ENCODE measurements at regions of chr12 and their contacts with region 1.

Region 1: DNA sequence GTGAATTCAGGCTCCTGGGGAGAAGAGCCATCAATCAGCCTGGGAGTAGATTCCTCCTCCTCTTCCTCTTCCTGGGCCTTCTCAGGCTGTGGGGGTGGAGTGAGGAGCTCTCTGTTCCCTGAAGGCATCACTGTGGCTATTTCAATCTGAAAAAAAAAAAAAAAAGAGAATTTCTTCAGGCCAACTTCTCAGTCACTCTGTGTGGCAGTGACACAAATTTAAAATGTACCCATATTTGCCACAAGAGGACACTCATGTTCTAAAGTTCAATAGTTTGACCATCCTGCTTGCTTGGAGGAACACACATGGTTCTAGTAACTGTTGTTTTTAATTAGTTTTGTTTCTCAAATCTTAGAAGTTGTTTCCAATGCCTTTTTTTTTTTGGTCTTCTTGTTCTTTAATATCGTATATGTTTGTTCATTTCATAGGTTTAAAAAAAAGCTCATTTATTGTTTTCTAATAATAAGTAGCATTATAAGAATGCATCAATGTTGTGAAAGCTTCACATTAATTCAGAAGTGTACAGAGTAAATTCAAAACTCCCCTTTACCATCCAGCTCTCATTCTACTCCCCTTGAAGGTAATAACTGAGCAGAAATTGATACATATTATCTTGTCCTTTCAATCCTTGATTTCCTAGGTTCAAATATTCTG is 23.3 kb upstream of the CCER1 start:
- DNase-seq: no peak
- ATAC-seq: peak; percentile 38 to 74 (median 51)
- H3K4me3 ChIP-seq: no peak overlapping the region
- H3K27ac ChIP-seq: no peak overlapping the region
- H3K4me1 ChIP-seq: no peaks in the 10 kb centered on the region
- H3K27me3 ChIP-seq: peaks cover 0 to 3% (median 0%) of the 10 kb centered on the region in 3 donors
- CTCF ChIP-seq: peak; percentile 54

Region 2: DNA sequence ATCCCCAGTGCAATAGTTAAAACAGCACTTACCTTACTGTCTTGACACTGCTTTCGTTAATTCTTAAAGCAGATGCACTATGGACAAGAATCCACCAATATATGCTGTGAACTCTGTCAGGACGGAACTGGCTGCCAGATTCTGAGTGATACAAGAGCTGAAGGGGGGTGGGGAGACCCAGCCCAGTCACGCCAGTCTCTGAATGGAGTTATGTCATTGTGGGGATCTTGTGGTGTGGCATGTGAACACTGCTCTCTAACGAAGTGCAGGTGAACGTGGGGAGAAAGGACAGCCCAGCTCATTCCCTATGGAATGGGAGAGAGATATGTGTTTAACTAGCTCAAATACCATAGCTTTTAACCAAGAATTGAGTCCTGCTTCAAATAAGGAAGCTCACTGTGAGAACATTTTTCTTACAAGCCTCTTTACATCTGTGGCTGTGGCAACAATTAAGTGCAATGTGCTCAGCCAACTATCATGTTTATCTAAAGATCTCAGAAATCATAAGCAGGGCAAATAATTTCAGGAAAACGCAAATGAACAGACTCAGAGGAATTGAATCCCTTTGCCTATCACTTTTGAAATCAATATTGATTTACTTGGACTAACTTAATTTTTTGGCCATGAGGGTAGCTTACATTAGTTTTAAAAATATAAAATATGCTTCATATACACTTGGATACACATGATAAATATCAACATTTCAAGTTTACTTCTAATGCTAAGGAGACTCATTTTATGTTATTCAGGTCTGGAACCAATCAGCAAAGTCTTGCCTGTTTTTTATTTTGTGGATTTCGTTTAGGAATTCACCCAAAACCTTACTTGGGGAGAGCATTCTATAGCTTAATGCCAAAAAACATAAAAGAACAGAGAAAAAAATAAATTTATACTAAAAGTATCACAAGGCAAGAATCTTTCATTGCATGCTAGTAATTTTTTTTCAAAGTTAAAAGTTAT is 133.4 kb after region 1 on chr12 and contains the start of gene LUM:
- intact Hi-C with region 1: loop called in 1 of 2 experiments (anchors 10 kb)
- DNase-seq: peak; percentile 25 to 47
- ATAC-seq: peak in 1 of 4 donors; percentile 29
- H3K4me3 ChIP-seq: peak within 1 kb of the TSS; percentile 36
- H3K27ac ChIP-seq: no peak within 1 kb of the TSS
- H3K4me1 ChIP-seq: no peaks in the 10 kb centered on the region
- H3K27me3 ChIP-seq: no peaks in the 10 kb centered on the region
- CTCF ChIP-seq: no peak
- total RNA-seq, gene LUM: 2.7 to 35.7 (median 14.0) TPM

Region 3: GRCh38 chr12:91355150-91356006 is 377.1 kb after region 1 on chr12:
- intact Hi-C with region 1: loop called (anchors 5 kb)
- DNase-seq: peak; percentile 57 to 75
- ATAC-seq: peak; percentile 68 to 88 (median 80)
- H3K4me3 ChIP-seq: no peak overlapping the region
- H3K27ac ChIP-seq: no peak overlapping the region
- H3K4me1 ChIP-seq: no peaks in the 10 kb centered on the region
- H3K27me3 ChIP-seq: peaks cover 0 to 2% (median 0%) of the 10 kb centered on the region in 3 donors
- CTCF ChIP-seq: peak; percentile 72

Measured in psoas muscle (tissue), 8 donors.